ENCODE measurements at regions of chr3 and their contacts with region 1.

Region 1: DNA sequence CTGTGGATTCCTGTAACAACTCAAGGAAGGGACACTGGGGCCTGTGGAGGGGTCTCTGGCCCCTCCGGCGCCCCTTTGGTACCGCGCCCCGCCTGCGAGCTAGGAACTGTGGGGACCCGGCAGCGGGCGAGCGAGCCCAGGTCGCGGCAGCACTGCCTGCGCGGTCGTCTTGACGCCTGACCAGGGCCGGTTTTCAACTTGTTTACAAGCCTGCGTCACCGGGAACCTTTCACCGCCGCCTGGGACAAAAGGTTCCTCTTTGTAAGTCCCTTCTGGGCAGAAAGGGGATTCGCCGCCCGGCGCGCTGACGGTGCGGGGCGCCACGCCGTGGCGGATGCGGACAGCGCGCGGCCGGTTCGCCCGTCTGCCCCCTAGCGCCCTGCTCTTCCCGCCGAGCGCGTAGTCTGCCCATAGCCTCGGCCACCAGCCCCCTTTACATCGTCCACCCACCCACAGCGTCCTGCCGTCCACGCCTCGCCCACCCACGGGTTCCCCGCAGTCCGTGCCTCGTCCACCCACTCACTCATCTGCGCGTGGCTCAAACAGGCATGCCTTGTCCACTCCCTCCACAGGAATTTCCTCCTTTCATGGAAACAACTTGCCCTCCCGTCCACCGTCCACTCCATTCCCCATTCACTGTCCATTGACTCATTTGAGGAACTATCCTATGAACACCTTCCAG is 5.5 kb upstream of the CFAP100 start:
- DNase-seq: peak; percentile 96 to 98
- H3K4me3 ChIP-seq: peak overlapping the region; percentile 32 to 44
- H3K27ac ChIP-seq: peak overlapping the region; percentile 82 to 89
- H3K4me1 ChIP-seq: peaks cover 0 to 13% (median 9%) of the 10 kb centered on the region in 4 donors
- H3K27me3 ChIP-seq: no peaks in the 10 kb centered on the region
- CTCF ChIP-seq: peak; percentile 98 to 99

Region 2: GRCh38 chr3:126245811-126246727 is 143.2 kb before region 1 on chr3:
- intact Hi-C with region 1: loop called (anchors 5 kb)
- DNase-seq: peak; percentile 74 to 81
- H3K4me3 ChIP-seq: no peak overlapping the region
- H3K27ac ChIP-seq: no peak overlapping the region
- H3K4me1 ChIP-seq: peaks cover 0 to 11% (median 0%) of the 10 kb centered on the region in 4 donors
- H3K27me3 ChIP-seq: no peaks in the 10 kb centered on the region
- CTCF ChIP-seq: peak; percentile 43 to 52

Region 3: GRCh38 chr3:126259411-126260391 is 129.6 kb before region 1 on chr3:
- intact Hi-C with region 1: loop called (anchors 2 kb)
- DNase-seq: peak in 1 of 2 donors; percentile 86
- H3K4me3 ChIP-seq: peak overlapping the region; percentile 24 to 41
- H3K27ac ChIP-seq: peak overlapping the region; percentile 65 to 80
- H3K4me1 ChIP-seq: peaks cover 0 to 23% (median 15%) of the 10 kb centered on the region in 4 donors
- H3K27me3 ChIP-seq: no peaks in the 10 kb centered on the region
- CTCF ChIP-seq: peak; percentile 70 to 84

Region 4: DNA sequence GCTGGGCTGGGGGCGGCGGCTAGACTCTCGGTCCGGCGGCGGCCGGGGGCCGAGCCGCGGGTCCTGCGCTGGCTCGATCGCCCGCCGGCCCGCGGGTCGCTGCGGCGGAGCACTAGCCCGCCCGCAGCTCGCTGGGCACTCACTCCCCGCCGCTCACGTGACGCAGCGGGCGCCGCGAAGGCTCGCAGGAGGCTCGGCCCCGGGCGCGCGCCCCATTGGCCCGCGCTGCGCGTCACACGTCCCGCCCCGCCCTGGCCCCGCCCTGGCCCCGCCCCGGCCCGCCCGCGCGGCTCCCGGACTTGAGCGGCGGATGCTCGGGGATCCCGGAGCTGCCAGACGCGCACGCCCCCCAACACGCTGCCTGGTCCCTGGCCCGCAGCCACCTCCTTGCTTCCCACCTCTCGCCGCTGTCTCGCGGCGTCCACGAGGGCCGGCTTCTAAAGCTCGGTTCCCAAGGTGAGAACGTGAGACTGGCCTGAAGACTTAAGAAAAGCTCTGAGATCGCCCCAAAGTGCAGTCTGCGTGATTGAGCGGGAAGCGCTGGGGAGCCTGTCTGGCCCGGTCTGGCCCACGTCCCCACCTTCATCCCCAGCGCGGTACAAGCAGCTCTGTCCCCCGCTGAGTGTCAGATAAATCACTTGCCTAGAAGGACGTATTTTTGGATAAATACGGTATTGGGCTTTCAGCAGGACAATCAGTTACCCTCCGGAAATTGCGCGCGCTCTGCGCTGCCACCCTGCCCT is 31.8 kb before region 1 on chr3 and contains the start of gene KLF15:
- intact Hi-C with region 1: loop called (anchors 2 kb)
- DNase-seq: peak; percentile 86 to 96
- H3K4me3 ChIP-seq: peak within 1 kb of the TSS; percentile 60 to 100
- H3K27ac ChIP-seq: peak within 1 kb of the TSS; percentile 94 to 100
- H3K4me1 ChIP-seq: peaks cover 0 to 40% (median 33%) of the 10 kb centered on the region in 4 donors
- H3K27me3 ChIP-seq: peaks cover 0 to 6% of the 10 kb centered on the region in 2 donors
- CTCF ChIP-seq: peak in 1 of 2 experiments; percentile 10

Region 5: GRCh38 chr3:126373682-126374601 is 15.3 kb before region 1 on chr3:
- intact Hi-C with region 1: no loop called
- DNase-seq: peak in 1 of 2 donors; percentile 64
- H3K4me3 ChIP-seq: no peak overlapping the region
- H3K27ac ChIP-seq: no peak overlapping the region
- H3K4me1 ChIP-seq: no peaks in the 10 kb centered on the region
- H3K27me3 ChIP-seq: no peaks in the 10 kb centered on the region
- CTCF ChIP-seq: no peak

Region 6: GRCh38 chr3:126530171-126531050 is 141.2 kb after region 1 on chr3:
- intact Hi-C with region 1: no loop called
- DNase-seq: peak; percentile 56 to 76
- H3K4me3 ChIP-seq: no peak overlapping the region
- H3K27ac ChIP-seq: no peak overlapping the region
- H3K4me1 ChIP-seq: no peaks in the 10 kb centered on the region
- H3K27me3 ChIP-seq: peaks cover 0 to 22% of the 10 kb centered on the region in 2 donors
- CTCF ChIP-seq: no peak

Region 7: GRCh38 chr3:126703512-126704462 is 314.5 kb after region 1 on chr3 and contains the start of gene CHCHD6:
- intact Hi-C with region 1: no loop called
- DNase-seq: peak; percentile 94 to 95
- H3K4me3 ChIP-seq: peak within 1 kb of the TSS; percentile 71 to 99
- H3K27ac ChIP-seq: peak within 1 kb of the TSS; percentile 60 to 63
- H3K4me1 ChIP-seq: peaks cover 0 to 14% (median 13%) of the 10 kb centered on the region in 4 donors
- H3K27me3 ChIP-seq: peaks cover 0 to 8% of the 10 kb centered on the region in 2 donors
- CTCF ChIP-seq: peak in 1 of 2 experiments; percentile 21

Measured in tibial artery (tissue), 4 donors.